GM10248 (cell line): ENCODE measurements at regions of chr2 and their contacts with region 1.

Region 1: DNA sequence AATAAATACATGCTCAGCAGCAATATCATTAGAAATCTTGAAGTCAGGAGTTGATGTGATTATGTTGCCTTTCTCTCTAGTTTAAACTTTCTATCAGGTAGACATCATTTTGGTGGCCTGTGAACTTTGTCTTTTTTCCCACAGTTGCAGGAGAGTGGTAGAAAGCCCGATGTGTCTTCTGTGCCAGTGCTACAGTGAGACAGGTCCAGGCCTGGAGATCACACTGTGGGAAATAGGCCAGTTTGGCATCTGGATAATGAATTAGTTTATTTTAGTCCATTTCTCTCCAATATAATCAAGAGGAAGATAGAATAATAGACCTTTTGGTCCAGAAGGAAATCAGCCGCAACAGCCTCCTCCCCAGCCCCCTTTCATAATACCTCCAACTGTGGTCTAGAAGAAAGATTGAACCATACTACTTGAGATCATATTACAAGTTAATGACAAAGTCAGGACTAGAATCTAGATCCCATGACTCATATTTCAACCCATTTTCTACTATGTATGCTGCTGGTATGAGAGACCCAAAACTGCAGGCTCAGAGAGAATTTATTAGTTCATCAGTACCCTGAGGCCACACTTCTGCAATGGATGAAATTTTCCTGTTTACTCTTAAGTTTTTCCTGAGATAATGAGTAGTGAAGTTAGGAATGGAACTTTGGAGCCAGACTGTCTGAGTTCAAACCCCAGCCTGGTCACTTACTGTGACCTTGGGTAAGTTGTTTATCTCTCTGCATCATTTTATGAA is 20.6 kb downstream of the KCMF1 start:
- DNase-seq: no peak
- CTCF ChIP-seq: no peak

Region 2: GRCh38 chr2:85001595-85001994 is 10.0 kb after region 1 on chr2:
- CTCF ChIA-PET with region 1: interaction called, 15 read pairs
- POLR2A ChIA-PET with region 1: no interaction called
- DNase-seq: no peak
- CTCF ChIP-seq: no peak